ENCODE measurements at regions of chr16 and their contacts with region 1.

Region 1: DNA sequence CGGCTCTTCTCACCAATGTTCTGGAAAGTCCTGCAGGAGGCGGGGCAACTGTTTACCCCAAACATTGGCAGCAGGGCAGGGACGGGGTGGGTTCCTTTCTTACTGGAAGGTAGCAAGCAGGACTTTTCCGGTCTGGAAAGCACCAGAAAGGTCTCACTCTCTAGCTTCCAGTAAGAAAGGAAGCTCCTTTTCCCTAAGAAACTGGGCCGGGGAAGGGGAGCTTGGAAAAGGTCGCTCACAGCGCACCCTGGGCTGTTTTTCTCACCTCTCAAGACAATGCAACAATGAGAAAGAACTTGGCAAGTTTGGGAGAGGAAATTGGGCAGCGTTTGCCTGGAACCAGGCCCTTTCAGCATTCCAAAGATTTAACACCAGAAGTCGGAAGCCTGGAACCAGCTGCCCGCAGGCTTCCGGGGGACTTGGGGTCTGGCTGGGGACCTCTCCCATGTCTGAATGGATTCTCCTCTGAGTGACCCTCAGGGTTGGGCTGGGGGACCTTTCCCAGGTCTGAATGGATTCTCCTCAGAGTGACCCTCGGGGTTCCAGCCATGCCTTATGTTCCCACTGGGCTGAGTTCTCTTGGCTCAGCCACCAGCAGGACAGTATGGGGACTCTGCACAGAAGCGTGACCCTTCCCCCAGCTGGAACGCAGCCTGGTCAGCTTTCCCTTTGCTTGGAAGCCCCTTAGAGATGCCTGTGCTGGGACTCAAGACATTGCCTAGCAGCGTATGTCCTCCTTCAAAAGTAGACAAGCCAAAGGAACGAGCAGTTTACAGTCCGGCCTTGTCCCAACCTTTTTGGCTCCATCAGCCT is 166.5 kb upstream of the PLCG2 start:
- DNase-seq: no peak
- H3K4me3 ChIP-seq: no peak overlapping the region
- CTCF ChIP-seq: no peak

Region 2: GRCh38 chr16:81623363-81624102 is 11.0 kb after region 1 on chr16:
- CTCF ChIA-PET with region 1: interaction called, 18 read pairs
- POLR2A ChIA-PET with region 1: no interaction called
- DNase-seq: no peak
- H3K4me3 ChIP-seq: no peak overlapping the region
- CTCF ChIP-seq: peak; percentile 55

Measured in AG04449 (cell line).